ENCODE measurements at regions of chr9 and their contacts with region 1.

Region 1: DNA sequence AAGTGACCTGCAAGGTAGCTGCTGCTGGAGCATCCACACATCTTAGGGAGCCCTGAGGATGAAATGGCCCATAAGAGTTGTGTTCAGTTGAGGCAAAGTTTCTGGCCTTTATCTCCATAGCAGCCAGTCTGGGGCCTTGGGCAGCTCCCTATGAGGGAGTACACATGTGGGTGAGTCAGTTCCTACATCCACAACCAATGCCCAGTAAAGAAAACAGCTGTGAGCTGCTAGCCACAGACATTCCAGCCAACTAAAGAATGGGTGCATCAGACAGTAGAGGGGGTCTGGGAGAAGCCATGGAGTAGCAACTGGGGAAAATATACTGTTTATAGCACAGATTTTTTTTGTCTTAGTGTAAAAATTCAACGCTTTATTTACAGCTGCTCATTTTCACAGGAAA is 720.7 kb downstream of the TLE1 start:
- DNase-seq: no peak
- H3K4me3 Mint-ChIP-seq: no peak overlapping the region
- H3K27ac Mint-ChIP-seq: no peak overlapping the region
- H3K4me1 Mint-ChIP-seq: no peaks in the 10 kb centered on the region
- H3K27me3 Mint-ChIP-seq: no peaks in the 10 kb centered on the region

Region 2: DNA sequence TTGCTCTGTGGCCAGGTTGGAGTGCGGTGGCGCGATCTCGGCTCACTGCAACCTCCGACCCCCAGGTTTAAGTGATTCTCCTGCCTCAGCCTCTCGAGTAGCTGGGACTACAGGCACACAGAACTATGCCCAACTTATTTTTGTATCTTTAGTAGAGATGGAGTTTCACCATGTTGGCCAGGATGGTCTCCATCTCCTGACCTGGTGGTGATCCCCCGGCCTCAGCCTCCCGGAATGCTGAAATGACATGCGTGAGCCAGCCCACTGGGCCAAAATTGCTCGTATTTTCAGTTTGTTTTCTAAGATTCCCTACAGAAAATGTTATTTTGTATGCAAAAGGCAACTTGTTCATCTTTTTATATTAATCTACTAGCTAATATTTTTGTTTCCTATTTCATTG is 61.9 kb before region 1 on chr9:
- intact Hi-C with region 1: loop called (anchors 10 kb)
- DNase-seq: no peak
- H3K4me3 Mint-ChIP-seq: no peak overlapping the region
- H3K27ac Mint-ChIP-seq: no peak overlapping the region
- H3K4me1 Mint-ChIP-seq: no peaks in the 10 kb centered on the region
- H3K27me3 Mint-ChIP-seq: no peaks in the 10 kb centered on the region